A549 (cell line): ENCODE measurements at regions of chr20 and their contacts with region 1.

Region 1: DNA sequence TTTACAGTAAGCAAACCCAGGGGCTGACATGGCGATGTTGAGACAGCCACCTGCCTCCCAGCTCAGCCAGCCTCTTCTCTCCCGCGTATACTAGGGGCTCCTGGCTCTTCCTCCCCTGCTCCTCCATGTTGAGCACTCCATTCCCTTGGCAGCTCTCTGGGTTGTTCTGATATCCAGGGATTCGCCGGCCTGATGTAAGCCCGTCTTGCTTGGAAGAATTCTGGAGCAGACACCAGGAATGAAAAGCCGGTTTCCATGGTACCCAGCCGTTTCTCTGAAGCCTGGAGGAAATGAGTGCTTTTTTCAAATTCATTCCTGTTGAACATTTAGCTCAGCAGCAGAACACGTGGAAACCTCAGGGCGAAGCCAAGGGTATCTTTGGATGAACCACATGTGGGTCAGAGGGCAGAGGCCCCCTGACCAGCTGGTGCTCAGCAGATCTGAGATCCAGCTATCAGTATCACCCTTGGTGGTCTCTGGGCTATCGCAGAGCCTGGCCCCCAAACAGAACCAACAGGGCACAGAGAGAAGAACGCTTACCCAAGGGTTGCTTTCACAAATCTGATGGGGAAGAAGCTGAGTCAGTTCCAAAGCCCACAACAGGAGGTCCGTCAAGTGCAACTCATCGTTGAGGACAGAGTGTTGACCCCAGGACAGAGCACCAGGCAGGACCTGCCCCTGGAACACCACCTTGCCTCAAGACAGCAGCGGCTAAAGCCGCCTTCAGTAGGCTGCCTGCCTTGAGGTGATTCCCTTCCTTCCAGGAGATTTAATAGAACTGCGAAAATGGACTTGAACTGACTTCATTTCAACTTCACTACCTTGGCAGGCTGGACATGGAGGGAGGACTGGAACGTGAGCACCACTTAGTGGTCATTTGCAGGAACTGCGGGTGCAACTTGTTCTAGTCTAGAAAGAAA is 96.1 kb upstream of the RIN2 start:
- DNase-seq: peak; percentile 55 to 79
- ATAC-seq: peak; percentile 75 to 90
- H3K4me3 ChIP-seq: no peak overlapping the region
- H3K27ac ChIP-seq: no peak overlapping the region
- H3K4me1 ChIP-seq: no peaks in the 10 kb centered on the region
- CTCF ChIP-seq: peak; percentile 97
- EP300 ChIP-seq: no peak
- POLR2A ChIP-seq: no peak
- RAD21 ChIP-seq: peak; percentile 96 to 99

Region 2: DNA sequence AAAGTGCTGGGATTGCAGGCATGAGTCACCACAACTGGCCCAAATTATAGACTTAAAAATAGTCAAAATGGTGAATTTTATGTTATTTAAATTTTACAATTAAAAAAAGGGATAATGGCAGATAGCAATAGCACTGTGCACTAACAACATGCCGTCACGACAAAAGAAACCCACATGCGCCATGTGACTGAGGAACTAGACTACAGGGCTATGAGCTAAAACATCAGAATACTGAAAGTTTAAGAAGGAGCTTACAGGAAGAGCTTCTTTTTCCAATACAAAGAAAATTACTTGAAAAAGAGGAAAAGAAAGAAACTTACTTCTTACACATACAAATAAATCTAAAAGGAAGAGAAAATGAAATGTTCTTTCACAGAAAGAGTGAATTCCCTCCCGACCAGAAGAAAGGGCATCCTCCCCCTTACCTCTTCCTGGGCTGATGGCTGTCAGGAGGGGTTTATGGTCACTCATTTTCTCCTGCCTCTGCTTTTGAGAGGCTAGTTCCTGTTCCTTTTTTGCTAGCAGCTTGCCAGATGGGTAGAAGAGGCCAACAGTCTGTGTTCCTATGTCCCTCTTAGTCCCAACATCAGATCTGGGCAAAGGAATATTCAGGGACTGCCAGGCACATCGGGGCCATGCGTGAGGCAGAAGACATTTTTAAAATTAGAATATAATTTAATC is 1249.6 kb before region 1 on chr20:
- CTCF ChIA-PET with region 1: interaction called, 16 read pairs
- POLR2A ChIA-PET with region 1: no interaction called
- DNase-seq: no peak
- ATAC-seq: no peak
- H3K4me3 ChIP-seq: no peak overlapping the region
- H3K27ac ChIP-seq: no peak overlapping the region
- H3K4me1 ChIP-seq: no peaks in the 10 kb centered on the region
- CTCF ChIP-seq: no peak
- EP300 ChIP-seq: no peak
- POLR2A ChIP-seq: no peak
- RAD21 ChIP-seq: no peak

Region 3: DNA sequence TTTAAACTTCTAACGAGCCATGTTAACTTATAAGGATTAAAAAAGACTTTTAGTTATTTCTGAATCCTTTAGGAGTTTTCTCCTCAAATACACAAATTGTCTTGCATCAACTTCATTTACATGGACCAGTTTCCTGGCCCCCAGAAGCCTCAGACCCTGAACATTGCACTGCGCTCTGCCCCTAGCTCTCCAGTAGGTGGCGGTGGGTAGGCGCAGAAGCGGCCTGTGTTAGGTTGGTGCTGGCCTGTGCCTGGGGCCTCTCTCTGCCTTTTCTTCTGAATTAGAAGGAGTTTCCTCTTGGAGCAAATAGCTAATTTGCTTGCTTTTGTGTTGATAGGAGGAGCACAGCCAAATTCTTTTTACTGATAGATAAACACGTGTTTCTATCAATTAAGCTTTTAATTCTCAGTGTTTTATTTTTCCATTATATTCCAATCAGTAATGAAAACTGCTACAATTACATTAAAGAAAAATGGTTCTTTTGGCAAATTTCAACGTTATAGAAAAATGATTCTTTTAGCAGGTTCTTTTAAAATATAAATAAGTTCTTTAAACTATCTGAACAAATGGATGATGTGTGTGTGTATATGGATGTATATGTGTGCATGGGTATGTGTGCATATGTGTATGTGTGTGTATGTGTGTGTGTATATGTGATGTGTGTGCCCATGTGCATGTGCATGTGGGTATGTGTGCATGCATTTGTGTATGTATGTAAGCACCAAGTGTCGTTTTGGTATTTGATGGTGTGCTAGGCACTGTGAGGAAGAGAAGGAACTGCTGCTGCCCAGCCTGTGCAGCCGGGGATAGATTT is 1029.6 kb before region 1 on chr20:
- CTCF ChIA-PET with region 1: interaction called, 20 read pairs
- POLR2A ChIA-PET with region 1: no interaction called
- DNase-seq: peak; percentile 63 to 70
- ATAC-seq: peak; percentile 95 to 99
- H3K4me3 ChIP-seq: no peak overlapping the region
- H3K27ac ChIP-seq: no peak overlapping the region
- H3K4me1 ChIP-seq: no peaks in the 10 kb centered on the region
- CTCF ChIP-seq: peak; percentile 94
- EP300 ChIP-seq: no peak
- POLR2A ChIP-seq: no peak
- RAD21 ChIP-seq: peak; percentile 94 to 98

Region 4: DNA sequence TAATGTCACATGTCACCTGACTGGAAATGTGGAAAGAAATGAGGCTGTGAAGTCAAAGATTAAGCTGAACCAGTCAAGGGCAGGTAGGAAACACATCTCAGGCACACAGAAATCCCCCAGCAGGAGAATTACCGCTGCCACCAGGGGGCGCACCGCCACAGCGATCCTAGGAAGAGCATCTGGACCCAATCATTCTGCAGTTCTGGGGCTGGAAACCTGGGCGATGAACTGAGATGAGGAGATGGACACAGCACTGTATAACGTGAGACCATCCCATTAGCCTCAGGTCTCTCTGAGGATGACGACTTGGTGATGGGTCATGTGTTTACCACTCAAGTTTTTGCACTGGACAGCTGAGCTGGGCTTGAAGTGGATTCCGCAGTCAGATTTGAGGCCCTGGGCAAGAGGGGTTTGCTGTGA is 456.0 kb before region 1 on chr20:
- CTCF ChIA-PET with region 1: interaction called, 74 read pairs
- POLR2A ChIA-PET with region 1: no interaction called
- DNase-seq: peak; percentile 47 to 62
- ATAC-seq: peak; percentile 84 to 95
- H3K4me3 ChIP-seq: no peak overlapping the region
- H3K27ac ChIP-seq: no peak overlapping the region
- H3K4me1 ChIP-seq: no peaks in the 10 kb centered on the region
- CTCF ChIP-seq: peak; percentile 88
- EP300 ChIP-seq: no peak
- POLR2A ChIP-seq: no peak
- RAD21 ChIP-seq: peak; percentile 73 to 79

Region 5: GRCh38 chr20:19628570-19629169 is 33.3 kb before region 1 on chr20:
- CTCF ChIA-PET with region 1: interaction called, 22 read pairs
- POLR2A ChIA-PET with region 1: no interaction called
- DNase-seq: peak; percentile 56 to 80
- ATAC-seq: peak; percentile 83 to 95; a peak in 5 of 6 replicates
- H3K4me3 ChIP-seq: no peak overlapping the region
- H3K27ac ChIP-seq: peak overlapping the region in 1 of 2 experiments; percentile 37; a peak in 1 of 6 replicates
- H3K4me1 ChIP-seq: no peaks in the 10 kb centered on the region
- CTCF ChIP-seq: peak; percentile 68
- EP300 ChIP-seq: no peak
- POLR2A ChIP-seq: no peak
- RAD21 ChIP-seq: peak; percentile 44 to 62; a peak in 4 of 5 replicates

Region 6: GRCh38 chr20:19644085-19644484 is 17.9 kb before region 1 on chr20:
- CTCF ChIA-PET with region 1: interaction called, 35 read pairs
- POLR2A ChIA-PET with region 1: no interaction called
- DNase-seq: no peak
- ATAC-seq: no peak
- H3K4me3 ChIP-seq: no peak overlapping the region
- H3K27ac ChIP-seq: no peak overlapping the region
- H3K4me1 ChIP-seq: no peaks in the 10 kb centered on the region
- CTCF ChIP-seq: no peak
- EP300 ChIP-seq: no peak
- POLR2A ChIP-seq: no peak
- RAD21 ChIP-seq: no peak

Region 7: DNA sequence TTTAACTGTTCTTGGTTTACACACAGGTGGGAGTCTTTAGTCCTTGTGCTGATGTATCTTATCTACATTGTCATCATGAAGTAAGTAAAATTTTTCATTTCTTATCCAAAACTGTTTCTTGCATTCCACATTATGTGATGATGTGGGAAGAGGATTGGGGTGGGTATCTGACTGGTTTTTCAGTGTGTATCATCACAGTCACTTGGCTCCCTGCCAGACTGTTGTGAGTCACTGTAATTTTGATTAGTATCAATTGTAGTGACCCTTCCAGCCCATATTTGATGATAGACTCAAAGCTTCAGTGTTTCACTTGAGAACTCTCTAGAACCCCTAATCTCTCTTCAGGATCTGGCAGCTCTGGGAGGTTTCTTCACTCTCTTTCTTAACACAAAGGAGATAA is 11.6 kb after region 1 on chr20:
- CTCF ChIA-PET with region 1: interaction called, 50 read pairs
- POLR2A ChIA-PET with region 1: no interaction called
- DNase-seq: no peak
- ATAC-seq: no peak; a peak in 1 of 6 replicates
- H3K4me3 ChIP-seq: no peak overlapping the region
- H3K27ac ChIP-seq: no peak overlapping the region
- H3K4me1 ChIP-seq: no peaks in the 10 kb centered on the region
- CTCF ChIP-seq: no peak
- EP300 ChIP-seq: no peak
- POLR2A ChIP-seq: no peak
- RAD21 ChIP-seq: no peak

Region 8: GRCh38 chr20:19815553-19815991 is 153.6 kb after region 1 on chr20:
- CTCF ChIA-PET with region 1: no interaction called
- POLR2A ChIA-PET with region 1: no interaction called
- DNase-seq: peak; percentile 95 to 96
- ATAC-seq: peak; percentile 99 to 100
- H3K4me3 ChIP-seq: no peak overlapping the region
- H3K27ac ChIP-seq: peak overlapping the region; percentile 80 to 89
- H3K4me1 ChIP-seq: peaks cover 40% of the 10 kb centered on the region
- CTCF ChIP-seq: peak; percentile 14; the same call in 2 of the 3 replicates
- EP300 ChIP-seq: peak; percentile 75 to 89; a peak in 3 of 5 replicates
- POLR2A ChIP-seq: no peak
- RAD21 ChIP-seq: peak; percentile 57 to 75

Region 9: DNA sequence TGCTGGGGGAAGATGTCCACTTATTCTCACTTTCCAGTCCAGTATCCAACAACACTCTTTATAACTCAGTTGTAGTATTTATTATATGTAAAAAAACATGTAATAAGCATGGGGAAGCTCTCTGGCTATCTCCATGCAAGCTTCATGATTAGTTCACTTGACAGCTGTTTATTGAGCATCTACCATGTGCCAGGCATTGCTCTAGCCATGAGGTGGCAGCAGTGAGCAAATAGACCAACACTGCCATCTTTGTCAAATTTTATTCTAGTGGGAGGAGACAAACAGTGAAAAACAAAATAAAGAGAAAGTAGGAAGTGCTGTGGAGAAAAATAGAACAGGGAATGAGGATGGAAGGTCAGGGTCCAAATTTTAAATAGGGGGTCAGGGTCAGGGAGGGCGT is 522.2 kb after region 1 on chr20:
- CTCF ChIA-PET with region 1: no interaction called
- POLR2A ChIA-PET with region 1: no interaction called
- DNase-seq: peak in 1 of 2 experiments; percentile 16
- ATAC-seq: peak in 1 of 2 experiments; percentile 47; a peak in 2 of 6 replicates
- H3K4me3 ChIP-seq: no peak overlapping the region
- H3K27ac ChIP-seq: no peak overlapping the region
- H3K4me1 ChIP-seq: no peaks in the 10 kb centered on the region
- CTCF ChIP-seq: peak; percentile 27; the same call in 1 of the 3 replicates
- EP300 ChIP-seq: no peak
- POLR2A ChIP-seq: no peak
- RAD21 ChIP-seq: peak in 1 of 2 experiments; percentile 30; a peak in 2 of 5 replicates